ENCODE measurements at regions of chr22 and their contacts with region 1.

Region 1: GRCh38 chr22:24525416-24526037 is 29.4 kb downstream of the GUCD1 start:
- DNase-seq: peak; percentile 60 to 80 (median 66)
- H3K4me3 ChIP-seq: no peak overlapping the region
- H3K27ac ChIP-seq: no peak overlapping the region
- H3K27me3 ChIP-seq: no peaks in the 10 kb centered on the region
- CTCF ChIP-seq: peak; percentile 39 to 90 (median 81)

Region 2: GRCh38 chr22:24189249-24190158 is 336.0 kb before region 1 on chr22:
- intact Hi-C with region 1: loop called in 1 of 2 experiments (anchors 10 kb)
- DNase-seq: peak in 7 of 10 donors; percentile 36 to 64 (median 47)
- H3K4me3 ChIP-seq: no peak overlapping the region
- H3K27ac ChIP-seq: peak overlapping the region in 4 of 59 donors; percentile 3 to 46 (median 36)
- H3K27me3 ChIP-seq: no peaks in the 10 kb centered on the region
- CTCF ChIP-seq: peak; percentile 15 to 85 (median 72)

Region 3: GRCh38 chr22:24325105-24325757 is 200.3 kb before region 1 on chr22:
- intact Hi-C with region 1: loop called (anchors 5 to 10 kb)
- DNase-seq: no peak
- H3K4me3 ChIP-seq: no peak overlapping the region
- H3K27ac ChIP-seq: peak overlapping the region in 2 of 59 donors; percentile 21 to 53
- H3K27me3 ChIP-seq: no peaks in the 10 kb centered on the region
- CTCF ChIP-seq: peak; percentile 38 to 85 (median 66)

Region 4: GRCh38 chr22:24423519-24424000 is 102.0 kb before region 1 on chr22:
- intact Hi-C with region 1: loop called in 1 of 2 experiments (anchors 5 kb)
- DNase-seq: peak in 2 of 10 donors; percentile 47 to 65
- H3K4me3 ChIP-seq: peak overlapping the region in 58 of 59 donors; percentile 29 to 72 (median 53)
- H3K27ac ChIP-seq: peak overlapping the region in 21 of 59 donors; percentile 39 to 81 (median 61)
- H3K27me3 ChIP-seq: peaks cover 0 to 29% (median 10%) of the 10 kb centered on the region in 45 donors
- CTCF ChIP-seq: peak; percentile 39 to 95 (median 76)

Region 5: GRCh38 chr22:24859587-24859986 is 334.1 kb after region 1 on chr22:
- intact Hi-C with region 1: no loop called
- DNase-seq: no peak
- H3K4me3 ChIP-seq: no peak overlapping the region
- H3K27ac ChIP-seq: no peak overlapping the region
- H3K27me3 ChIP-seq: no peaks in the 10 kb centered on the region
- CTCF ChIP-seq: no peak